Posterior cingulate gyrus (tissue), 11 donors: ENCODE measurements at regions of chr6 and their contacts with region 1.

Region 1: GRCh38 chr6:167826230-167826895 is 348 bp upstream of the AFDN start:
- DNase-seq: peak; percentile 64 to 96 (median 76)

Region 2: DNA sequence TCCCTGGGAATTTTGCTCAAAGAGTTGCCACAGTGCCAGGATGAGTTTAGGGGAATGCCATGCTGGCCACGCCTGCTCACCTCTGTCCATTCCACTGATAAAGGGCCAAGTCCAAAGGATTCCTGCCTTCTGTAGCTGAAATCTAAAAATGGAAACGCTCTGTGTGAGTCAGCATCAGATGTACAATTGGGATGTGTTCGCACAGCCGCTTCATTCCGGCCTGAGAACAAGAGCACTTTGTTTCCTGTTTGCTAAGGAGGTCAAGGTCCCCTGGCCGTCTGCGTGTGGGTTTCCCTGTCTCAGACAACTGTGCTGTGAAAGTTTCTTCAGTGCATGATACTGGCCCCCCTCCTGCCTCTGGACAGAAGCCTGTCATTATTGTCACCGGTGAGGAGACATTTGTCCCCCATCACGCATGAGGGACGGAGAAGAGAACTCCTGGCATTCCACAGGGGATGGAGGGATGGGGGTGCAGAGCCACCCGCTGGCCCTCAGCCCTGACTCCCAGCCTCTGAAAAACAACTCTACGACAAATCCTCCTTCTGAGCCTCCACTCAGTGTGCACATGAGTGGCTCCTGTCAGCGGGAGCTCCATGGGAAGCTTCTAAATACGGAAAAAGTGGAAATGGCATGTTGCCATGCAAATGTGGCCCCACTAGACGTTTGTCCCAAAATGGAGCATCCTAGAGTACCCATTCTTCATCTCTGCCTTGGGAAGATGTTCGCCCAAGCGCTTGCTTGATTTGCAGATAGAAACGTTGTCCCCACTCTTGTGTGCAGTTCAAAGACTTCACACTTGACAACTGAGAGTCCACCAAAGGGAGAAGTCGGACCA is 143.1 kb before region 1 on chr6:
- intact Hi-C with region 1: loop called (anchors 5 kb)
- DNase-seq: peak; percentile 58 to 95 (median 79)

Region 3: DNA sequence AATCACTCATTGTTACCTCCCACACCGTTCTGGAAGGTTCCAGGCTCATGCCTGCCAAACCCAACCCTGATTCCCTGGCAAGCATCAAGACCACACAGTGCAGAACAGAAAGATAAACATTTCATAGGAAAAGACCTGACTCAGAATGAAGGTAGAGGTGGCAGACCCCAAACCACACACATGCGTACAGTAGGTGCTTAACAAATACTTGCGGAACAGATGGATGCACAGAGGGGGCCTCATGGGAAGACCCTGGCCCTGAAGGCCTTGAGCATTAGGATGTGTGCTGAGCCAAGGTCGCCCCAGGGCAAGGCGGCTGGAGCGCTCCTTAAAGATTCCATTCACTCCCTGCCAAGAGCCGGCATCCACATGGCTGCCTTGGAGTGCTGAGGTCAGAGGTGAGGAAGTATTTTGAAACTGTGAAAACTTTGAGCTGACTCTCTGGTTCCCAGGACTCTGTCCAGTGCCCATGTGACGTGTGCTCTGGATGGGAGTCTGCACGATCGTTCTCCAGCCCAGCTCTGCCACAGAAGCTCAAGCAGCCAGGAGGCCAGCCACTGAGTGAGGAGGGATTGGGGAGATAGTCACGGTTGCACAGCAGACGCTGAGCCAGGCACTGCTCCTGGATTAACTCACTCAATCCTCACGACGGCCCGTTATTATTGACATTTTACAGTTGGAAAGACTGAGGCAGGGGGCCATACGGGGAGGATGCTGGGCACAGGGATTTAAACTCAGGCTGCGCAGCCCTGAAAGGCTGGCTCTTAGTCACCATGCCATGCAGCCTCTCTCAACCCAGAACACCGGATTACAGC is 65.2 kb before region 1 on chr6:
- intact Hi-C with region 1: loop called (anchors 5 kb)
- DNase-seq: peak in 2 of 10 donors; percentile 48 to 73